ENCODE measurements at regions of chr22 and their contacts with region 1.

Region 1: DNA sequence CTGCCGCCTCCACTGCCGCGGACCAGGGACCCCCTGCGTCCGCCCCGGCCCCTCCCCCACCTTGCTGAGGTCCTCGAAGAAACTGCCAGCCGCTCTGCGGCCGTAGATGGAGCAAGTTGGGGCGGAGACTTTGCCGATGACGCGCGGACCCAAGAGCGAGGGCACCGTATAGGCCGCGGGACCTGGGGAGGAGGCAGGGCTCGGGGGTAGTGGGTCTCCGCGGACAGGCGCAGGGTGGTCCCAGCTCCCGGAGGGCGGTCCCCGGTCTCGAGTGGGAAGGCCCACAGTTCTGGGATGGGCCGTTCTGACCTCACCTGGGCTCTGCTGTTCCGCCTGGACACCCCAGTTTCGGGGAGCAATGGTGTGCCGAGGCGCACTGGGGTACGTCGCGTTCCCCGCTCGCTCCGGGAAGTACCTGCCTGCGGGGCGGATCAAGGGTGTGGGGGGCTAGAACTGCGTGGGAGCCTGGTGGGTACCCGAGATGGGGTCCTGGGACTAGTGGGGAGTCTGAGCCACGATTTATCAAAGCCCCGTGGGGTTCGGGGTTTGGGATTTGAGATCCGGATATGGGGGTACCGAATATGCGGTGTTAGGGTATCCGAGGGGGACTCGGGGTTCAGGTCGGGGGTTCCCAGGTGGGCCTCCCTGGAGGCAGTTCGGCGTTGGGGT is 1.2 kb upstream of the TYMP start:
- DNase-seq: peak; percentile 78 to 88 (median 82)
- H3K4me3 ChIP-seq: peak overlapping the region; percentile 72 to 99 (median 92)
- H3K4me3 Mint-ChIP-seq: peak overlapping the region; percentile 90 to 93
- H3K27ac ChIP-seq: peak overlapping the region; percentile 100
- H3K27ac Mint-ChIP-seq: peak overlapping the region; percentile 99 to 100 (median 99)
- H3K4me1 ChIP-seq: peaks cover 67 to 87% of the 10 kb centered on the region in 2 donors
- H3K4me1 Mint-ChIP-seq: peaks cover 50% of the 10 kb centered on the region
- H3K27me3 ChIP-seq: no peaks in the 10 kb centered on the region
- H3K27me3 Mint-ChIP-seq: no peaks in the 10 kb centered on the region
- CTCF ChIP-seq: no peak

Region 2: DNA sequence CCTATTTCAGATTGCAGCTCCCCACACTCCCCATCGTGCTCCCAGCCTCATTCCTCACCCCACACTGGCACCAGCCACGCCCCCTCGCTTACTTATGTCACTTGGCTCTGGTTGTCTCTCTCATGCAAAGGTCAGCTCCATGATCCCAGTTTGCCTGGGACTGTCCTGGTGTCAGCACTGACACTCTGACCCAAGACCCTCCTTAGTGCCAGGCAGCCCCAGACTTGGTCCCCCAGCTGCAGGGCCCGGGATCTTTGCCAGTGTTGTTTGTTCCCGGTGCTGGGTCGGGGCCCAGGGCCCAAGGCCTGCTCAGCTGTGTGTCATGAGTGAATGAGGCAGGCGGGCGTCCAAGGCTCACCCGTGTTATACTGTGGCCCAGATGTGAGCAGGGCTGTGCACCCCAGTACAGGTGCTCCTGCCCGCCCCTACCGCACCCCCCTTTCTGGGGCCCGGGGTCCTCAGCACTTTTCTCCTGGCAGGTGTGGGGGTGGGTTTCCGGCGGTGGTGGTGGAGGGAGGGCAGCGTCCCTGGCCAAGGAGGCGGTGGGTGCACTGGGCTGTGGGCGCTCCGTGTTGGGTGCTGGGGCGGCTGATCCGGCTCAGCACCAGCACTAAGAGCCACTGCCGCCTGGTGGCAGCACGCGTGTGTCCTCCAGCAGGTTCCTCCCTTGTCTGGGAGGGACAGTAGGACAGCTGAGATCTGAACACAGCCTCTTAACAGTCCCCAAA is 537.9 kb before region 1 on chr22:
- intact Hi-C with region 1: no loop called
- DNase-seq: peak; percentile 59 to 79 (median 76)
- H3K4me3 ChIP-seq: no peak overlapping the region
- H3K4me3 Mint-ChIP-seq: no peak overlapping the region
- H3K27ac ChIP-seq: no peak overlapping the region
- H3K27ac Mint-ChIP-seq: peak overlapping the region in 1 of 7 donors; percentile 3
- H3K4me1 ChIP-seq: no peaks in the 10 kb centered on the region
- H3K4me1 Mint-ChIP-seq: peaks cover 6% of the 10 kb centered on the region
- H3K27me3 ChIP-seq: no peaks in the 10 kb centered on the region
- H3K27me3 Mint-ChIP-seq: peaks cover 9 to 14% (median 10%) of the 10 kb centered on the region in 3 donors
- CTCF ChIP-seq: peak; percentile 78

Region 3: DNA sequence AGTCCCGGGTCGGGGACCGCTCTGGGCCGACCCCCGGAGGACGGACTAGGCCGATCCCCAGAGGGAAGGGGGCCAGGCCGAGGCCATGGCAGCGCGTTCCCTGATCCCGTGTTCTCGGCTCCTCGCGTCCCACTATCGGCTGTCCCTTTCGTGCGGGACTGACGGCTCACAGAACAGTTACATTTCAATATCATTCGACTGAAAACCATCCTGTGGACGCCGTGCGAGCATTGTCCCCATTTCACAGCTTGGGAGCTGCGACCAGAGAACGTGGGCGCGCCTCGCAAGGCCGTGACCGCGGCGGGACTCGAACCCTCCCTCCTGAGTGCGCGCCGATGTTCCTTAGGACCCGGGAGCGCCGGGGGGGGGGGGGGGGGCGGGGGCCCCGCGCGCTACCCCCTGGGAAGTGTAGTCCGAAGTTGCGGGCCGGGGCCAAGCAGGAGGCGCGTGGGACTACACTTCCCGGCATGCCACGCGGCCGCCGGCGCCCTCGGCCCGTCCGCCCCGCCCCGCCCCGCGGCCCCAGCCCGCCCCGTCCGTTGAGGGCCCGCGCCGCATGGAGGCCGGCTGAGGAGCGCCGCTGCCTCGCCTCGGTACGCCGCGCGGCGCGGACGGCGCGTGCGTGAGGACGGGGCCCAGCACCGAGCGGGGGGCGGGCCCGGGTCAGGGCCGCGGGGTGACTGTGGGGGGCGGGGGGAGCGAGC is 345.5 kb before region 1 on chr22 and contains the start of gene TRABD:
- intact Hi-C with region 1: loop called in 1 of 2 experiments (anchors 5 kb)
- DNase-seq: peak; percentile 82 to 87 (median 87)
- H3K4me3 ChIP-seq: peak within 1 kb of the TSS; percentile 56 to 86 (median 58)
- H3K4me3 Mint-ChIP-seq: peak within 1 kb of the TSS; percentile 95
- H3K27ac ChIP-seq: peak within 1 kb of the TSS; percentile 31 to 85
- H3K27ac Mint-ChIP-seq: peak within 1 kb of the TSS; percentile 82 to 96 (median 89)
- H3K4me1 ChIP-seq: peaks cover 56 to 66% of the 10 kb centered on the region in 2 donors
- H3K4me1 Mint-ChIP-seq: peaks cover 46% of the 10 kb centered on the region
- H3K27me3 ChIP-seq: no peaks in the 10 kb centered on the region
- H3K27me3 Mint-ChIP-seq: peaks cover 1 to 5% (median 2%) of the 10 kb centered on the region in 3 donors
- CTCF ChIP-seq: no peak
- polyA plus RNA-seq, gene TRABD: 34.5 to 240 (median 39.3) TPM

Region 4: GRCh38 chr22:50306753-50307749 is 224.0 kb before region 1 on chr22 and contains the start of gene PLXNB2:
- intact Hi-C with region 1: loop called in 1 of 2 experiments (anchors 5 kb)
- DNase-seq: peak; percentile 63 to 71 (median 71)
- H3K4me3 ChIP-seq: peak within 1 kb of the TSS; percentile 90 to 100 (median 92)
- H3K4me3 Mint-ChIP-seq: peak within 1 kb of the TSS; percentile 96
- H3K27ac ChIP-seq: peak within 1 kb of the TSS; percentile 97 to 100
- H3K27ac Mint-ChIP-seq: peak within 1 kb of the TSS; percentile 95 to 100 (median 99)
- H3K4me1 ChIP-seq: peaks cover 57 to 62% of the 10 kb centered on the region in 2 donors
- H3K4me1 Mint-ChIP-seq: peaks cover 49% of the 10 kb centered on the region
- H3K27me3 ChIP-seq: no peaks in the 10 kb centered on the region
- H3K27me3 Mint-ChIP-seq: peaks cover 2% of the 10 kb centered on the region in 3 donors
- CTCF ChIP-seq: no peak
- polyA plus RNA-seq, gene PLXNB2: 38.2 to 368 (median 70.5) TPM

Region 5: DNA sequence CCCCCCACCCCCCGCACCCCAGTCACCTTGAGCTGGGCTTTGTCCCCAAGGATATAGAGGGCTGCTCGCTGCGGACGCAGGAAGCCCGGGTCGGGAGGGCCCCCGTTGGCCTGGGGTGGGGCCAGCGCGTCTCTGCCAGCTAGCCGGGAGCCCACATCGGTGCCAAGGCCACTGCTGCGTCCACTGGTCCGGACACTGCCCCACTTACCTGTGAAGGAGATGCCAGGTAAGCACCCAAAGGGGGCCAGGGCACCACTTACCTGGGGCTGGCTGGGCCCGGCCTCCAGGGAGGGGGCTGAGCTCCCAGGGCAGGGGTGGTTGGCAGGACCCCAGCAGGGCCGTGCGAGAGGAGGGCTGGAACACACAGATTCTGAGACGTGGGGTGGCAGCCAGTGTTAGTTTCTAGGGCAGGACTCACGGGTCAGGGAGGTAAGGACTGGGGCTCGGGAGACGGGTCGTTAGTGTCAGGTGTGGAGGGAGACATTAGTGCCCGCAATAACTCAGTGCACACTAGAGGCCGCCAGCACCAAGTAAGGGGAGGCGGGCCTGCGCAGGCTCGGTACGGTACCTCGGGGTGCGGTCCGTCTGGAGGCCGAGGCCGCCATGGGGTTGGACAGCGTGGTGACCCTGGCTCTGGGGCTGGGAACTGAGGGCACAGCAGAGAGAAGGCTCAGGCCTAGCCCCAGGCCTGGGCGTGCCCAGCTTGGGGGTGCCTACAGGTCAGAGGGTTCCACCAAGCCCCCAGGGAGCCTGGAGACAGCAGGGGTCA is 74.4 kb before region 1 on chr22:
- intact Hi-C with region 1: no loop called
- DNase-seq: no peak
- H3K4me3 ChIP-seq: no peak overlapping the region
- H3K4me3 Mint-ChIP-seq: no peak overlapping the region
- H3K27ac ChIP-seq: no peak overlapping the region
- H3K27ac Mint-ChIP-seq: no peak overlapping the region
- H3K4me1 ChIP-seq: no peaks in the 10 kb centered on the region
- H3K4me1 Mint-ChIP-seq: peaks cover 10% of the 10 kb centered on the region
- H3K27me3 ChIP-seq: no peaks in the 10 kb centered on the region
- H3K27me3 Mint-ChIP-seq: peaks cover 0 to 1% (median 0%) of the 10 kb centered on the region in 3 donors
- CTCF ChIP-seq: no peak

Region 6: DNA sequence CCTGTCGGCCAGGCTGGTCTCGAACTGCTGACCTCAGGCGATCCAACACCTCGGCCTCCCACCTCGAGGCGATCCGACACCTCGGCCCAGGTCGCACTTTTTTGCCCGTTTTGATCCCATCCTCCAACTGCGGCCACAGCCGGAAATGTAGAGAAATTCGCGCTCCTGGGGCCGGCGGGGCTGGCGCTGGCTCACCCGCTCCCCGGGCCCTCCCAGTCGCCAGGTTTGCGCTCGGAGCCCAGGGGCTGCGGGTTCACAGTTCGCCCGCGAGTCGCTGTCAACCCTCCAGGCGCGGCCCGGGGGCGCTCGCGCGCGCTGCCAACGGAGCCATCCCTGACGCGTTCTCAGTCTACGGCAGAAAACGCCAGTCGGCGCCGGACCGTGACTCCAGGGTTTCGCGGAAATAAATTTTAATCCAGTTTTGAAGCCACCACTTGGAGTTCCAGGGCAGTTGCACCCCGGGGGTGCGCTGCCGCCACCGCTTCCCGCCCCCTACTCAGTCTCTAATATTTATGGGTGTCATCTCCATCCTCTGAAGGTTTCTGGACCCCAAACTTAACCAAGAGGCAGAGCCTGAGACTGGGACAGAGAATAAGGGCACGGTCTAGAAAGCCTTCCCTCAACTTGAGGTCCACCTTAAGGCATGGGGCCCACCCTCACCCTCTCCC is 13.2 kb after region 1 on chr22:
- intact Hi-C with region 1: loop called (anchors 1 kb)
- DNase-seq: peak; percentile 86 to 89 (median 86)
- H3K4me3 ChIP-seq: peak overlapping the region; percentile 18 to 73 (median 34)
- H3K4me3 Mint-ChIP-seq: peak overlapping the region; percentile 72 to 79
- H3K27ac ChIP-seq: peak overlapping the region; percentile 99 to 100
- H3K27ac Mint-ChIP-seq: peak overlapping the region; percentile 97 to 100 (median 99)
- H3K4me1 ChIP-seq: peaks cover 78 to 96% of the 10 kb centered on the region in 2 donors
- H3K4me1 Mint-ChIP-seq: peaks cover 66% of the 10 kb centered on the region
- H3K27me3 ChIP-seq: no peaks in the 10 kb centered on the region
- H3K27me3 Mint-ChIP-seq: peaks cover 1 to 20% (median 3%) of the 10 kb centered on the region in 3 donors
- CTCF ChIP-seq: peak; percentile 76

Measured in CD14-positive monocyte (primary cell).